Posterior cingulate gyrus (tissue), 11 donors: ENCODE measurements at regions of chr11 and their contacts with region 1.

Region 1: DNA sequence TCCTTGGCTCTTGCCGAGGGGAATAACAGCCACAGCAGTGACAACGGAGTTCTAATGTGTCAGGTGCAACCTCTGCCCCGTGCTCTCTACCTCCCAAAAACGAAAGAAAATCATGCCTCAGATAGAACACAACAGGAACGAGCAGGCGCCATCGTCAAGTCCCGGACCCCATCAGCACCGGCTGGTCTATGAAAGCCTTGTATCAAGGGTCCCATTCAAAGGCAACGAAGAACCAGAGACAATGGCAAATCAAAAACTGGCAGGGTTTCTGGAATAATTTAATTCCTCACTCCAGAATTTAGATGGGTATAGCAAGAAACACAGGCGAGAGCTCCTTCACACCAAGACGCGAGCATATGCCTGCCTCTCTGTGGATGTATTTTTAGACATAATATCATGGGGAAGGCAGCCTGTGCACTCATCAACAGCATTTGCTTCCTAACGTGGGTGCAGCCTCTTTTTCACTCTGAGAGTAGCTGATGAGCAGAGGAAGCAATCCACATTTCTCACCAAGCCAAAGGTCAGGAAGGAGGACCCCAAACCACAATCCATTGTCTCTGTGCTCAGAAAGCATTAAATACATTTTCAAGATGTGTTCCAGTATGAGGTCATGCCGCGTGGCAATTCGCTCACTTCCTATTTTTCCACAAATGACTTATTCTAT is 193.4 kb upstream of the BLID start:
- DNase-seq: peak; percentile 18 to 89 (median 44)

Region 2: GRCh38 chr11:121863126-121863525 is 446.3 kb before region 1 on chr11:
- intact Hi-C with region 1: no loop called
- DNase-seq: no peak

Region 3: GRCh38 chr11:122215244-122215992 is 94.0 kb before region 1 on chr11:
- intact Hi-C with region 1: loop called (anchors 5 kb)
- DNase-seq: peak; percentile 63 to 97 (median 78)

Region 4: DNA sequence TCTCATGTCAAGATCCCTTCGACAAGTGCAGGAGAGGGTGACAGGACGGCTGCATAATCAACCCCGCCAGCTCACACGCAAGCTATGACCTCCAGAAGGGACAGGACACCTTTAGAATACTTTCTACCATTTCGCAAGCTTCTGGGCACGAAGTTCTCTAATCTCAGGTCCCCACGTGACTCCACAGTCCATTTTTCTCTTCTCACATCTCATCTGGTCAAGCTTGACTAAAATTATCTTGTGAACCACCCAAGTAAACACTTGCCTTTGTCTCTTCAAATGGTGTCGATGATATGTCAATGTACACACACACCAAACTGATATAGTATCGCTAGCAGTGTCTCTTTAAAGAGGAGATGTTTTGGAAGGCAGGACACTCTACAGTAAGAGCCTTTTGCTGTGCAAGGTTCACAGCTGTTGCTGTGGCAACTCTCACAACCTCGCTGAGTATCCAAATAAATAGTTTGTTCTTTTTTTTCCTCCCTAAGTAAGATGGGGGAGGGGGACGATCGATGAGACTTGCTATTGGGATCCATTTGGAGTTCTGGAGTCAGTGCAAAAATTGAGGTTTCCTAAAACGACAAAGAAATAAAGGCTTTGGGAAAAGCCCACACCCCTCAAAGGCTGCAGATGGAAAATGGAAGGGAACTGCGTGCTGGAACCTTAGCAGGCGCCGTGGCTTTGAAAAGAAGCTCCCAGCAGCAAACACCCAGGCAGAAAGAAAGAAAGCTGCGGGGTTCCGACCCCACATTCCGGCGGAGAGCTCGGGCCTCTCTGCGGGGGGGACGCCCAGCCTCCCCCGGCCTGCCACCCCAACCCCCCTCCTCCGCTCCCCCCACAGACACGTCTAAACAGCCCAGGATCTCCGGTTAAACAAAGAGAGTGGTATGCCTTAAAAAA is 130.8 kb after region 1 on chr11:
- intact Hi-C with region 1: loop called (anchors 5 kb)
- DNase-seq: peak in 6 of 10 donors; percentile 20 to 86 (median 35)